HCT116 (cell line): ENCODE measurements at regions of chr13 and their contacts with region 1.

Region 1: GRCh38 chr13:35309706-35310105 is 166.8 kb downstream of the MAB21L1 start:
- DNase-seq: no peak
- ATAC-seq: no peak
- H3K4me3 ChIP-seq: no peak overlapping the region
- H3K27ac ChIP-seq: no peak overlapping the region
- H3K4me1 ChIP-seq: no peaks in the 10 kb centered on the region
- H3K27me3 ChIP-seq: no peaks in the 10 kb centered on the region
- CTCF ChIP-seq: no peak
- POLR2A ChIP-seq: no peak
- RAD21 ChIP-seq: no peak

Region 2: DNA sequence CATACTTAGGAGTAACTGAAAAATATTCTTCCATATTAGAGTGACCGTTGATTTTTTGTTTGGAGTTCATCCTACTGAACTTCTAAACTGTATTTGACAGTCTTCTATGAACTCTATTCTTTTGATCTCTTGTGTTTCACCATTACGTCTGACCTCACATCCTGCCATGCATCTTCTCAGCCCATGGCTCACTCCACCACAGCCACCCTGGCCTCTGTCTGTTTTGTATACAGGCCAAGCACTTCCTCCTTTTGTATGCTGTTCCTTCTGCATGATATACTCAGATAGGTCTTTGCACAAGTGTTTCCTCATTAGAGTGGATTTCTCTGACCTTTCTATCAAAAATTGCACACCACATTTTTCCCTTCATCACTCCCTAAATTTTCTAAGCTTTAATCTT is 46.9 kb after region 1 on chr13:
- CTCF ChIA-PET with region 1: no interaction called
- POLR2A ChIA-PET with region 1: no interaction called
- RAD21 ChIA-PET with region 1: no interaction called
- intact Hi-C with region 1: loop called (anchors 1 kb)
- DNase-seq: no peak
- ATAC-seq: no peak
- H3K4me3 ChIP-seq: no peak overlapping the region
- H3K27ac ChIP-seq: no peak overlapping the region
- H3K4me1 ChIP-seq: no peaks in the 10 kb centered on the region
- H3K27me3 ChIP-seq: no peaks in the 10 kb centered on the region
- CTCF ChIP-seq: no peak
- POLR2A ChIP-seq: no peak
- RAD21 ChIP-seq: no peak

Region 3: DNA sequence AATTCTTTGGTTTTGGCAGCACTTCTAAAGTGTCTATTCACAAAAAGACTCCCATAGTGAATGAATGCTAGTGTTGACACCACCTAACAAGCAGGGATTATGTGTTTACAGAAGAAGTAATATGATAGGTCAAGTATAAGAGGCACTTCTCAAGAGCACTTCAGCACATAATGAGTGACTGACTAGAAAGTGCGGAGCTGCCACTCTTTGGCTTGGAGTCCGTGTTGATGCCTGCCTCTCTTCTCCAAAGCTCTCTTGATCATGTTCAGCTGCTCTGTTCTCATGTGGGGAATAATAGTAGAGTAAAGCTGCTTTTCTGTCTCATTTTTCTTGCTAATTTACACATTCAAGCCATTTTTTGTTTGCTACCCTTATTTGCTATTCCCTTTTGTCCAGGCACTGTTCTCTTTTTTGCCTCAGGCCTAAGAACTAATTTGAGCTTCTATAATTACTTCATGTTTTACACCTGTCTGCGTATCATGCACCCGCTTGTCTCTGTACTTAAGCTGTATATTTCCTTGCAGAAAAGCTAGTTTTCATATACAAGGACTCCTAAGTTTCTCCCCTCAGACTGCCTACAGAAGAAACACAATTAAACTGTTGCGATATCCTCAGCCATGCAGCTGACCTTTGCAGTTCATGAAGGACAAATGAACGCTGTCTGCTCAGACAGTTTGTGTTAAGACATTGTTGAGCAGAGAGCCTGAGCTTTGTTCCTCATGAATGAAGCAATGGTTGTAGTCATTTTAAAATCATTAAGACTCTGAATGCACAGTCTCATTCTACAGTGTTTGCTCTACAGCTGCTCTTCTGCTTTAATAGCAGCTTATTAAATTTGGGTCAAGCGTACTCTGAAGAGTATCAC is 189.7 kb after region 1 on chr13:
- CTCF ChIA-PET with region 1: no interaction called
- POLR2A ChIA-PET with region 1: no interaction called
- RAD21 ChIA-PET with region 1: no interaction called
- intact Hi-C with region 1: no loop called
- DNase-seq: no peak
- ATAC-seq: no peak
- H3K4me3 ChIP-seq: no peak overlapping the region
- H3K27ac ChIP-seq: no peak overlapping the region
- H3K4me1 ChIP-seq: no peaks in the 10 kb centered on the region
- H3K27me3 ChIP-seq: no peaks in the 10 kb centered on the region
- CTCF ChIP-seq: no peak
- POLR2A ChIP-seq: no peak
- RAD21 ChIP-seq: no peak

Region 4: DNA sequence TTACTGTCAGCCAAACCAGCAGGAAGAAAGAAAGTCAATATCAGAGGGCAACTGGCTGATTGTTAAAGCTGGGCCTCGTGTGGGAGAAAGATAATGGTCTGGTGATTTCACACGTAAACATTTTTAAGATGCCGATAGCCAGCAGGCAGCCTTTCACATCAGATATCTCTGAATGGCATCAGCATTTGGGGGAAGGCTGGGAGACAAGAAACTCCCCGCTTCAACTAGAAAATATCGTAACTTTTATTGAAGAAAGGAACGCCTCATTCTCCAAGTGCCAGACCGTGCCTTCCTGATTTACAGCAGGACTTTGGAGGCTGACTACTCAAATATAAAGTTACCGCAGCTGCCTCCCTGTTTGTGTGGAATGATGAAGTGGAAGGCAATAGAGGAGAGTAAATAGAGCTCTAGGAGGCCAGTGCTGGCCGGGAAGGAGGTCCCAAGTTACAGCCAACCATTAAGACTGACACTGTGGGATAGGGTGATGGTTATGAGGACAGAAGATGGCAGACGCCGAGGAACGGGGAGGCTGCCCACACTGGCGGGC is 451.1 kb after region 1 on chr13:
- CTCF ChIA-PET with region 1: no interaction called
- POLR2A ChIA-PET with region 1: no interaction called
- RAD21 ChIA-PET with region 1: no interaction called
- intact Hi-C with region 1: no loop called
- DNase-seq: no peak
- ATAC-seq: no peak
- H3K4me3 ChIP-seq: no peak overlapping the region
- H3K27ac ChIP-seq: no peak overlapping the region
- H3K4me1 ChIP-seq: no peaks in the 10 kb centered on the region
- H3K27me3 ChIP-seq: peaks cover 26% of the 10 kb centered on the region; the same call in 1 of the 2 replicates
- CTCF ChIP-seq: no peak
- POLR2A ChIP-seq: no peak
- RAD21 ChIP-seq: no peak